CD4-positive, alpha-beta T cell (primary cell): ENCODE measurements at regions of chr1 and their contacts with region 1.

Region 1: DNA sequence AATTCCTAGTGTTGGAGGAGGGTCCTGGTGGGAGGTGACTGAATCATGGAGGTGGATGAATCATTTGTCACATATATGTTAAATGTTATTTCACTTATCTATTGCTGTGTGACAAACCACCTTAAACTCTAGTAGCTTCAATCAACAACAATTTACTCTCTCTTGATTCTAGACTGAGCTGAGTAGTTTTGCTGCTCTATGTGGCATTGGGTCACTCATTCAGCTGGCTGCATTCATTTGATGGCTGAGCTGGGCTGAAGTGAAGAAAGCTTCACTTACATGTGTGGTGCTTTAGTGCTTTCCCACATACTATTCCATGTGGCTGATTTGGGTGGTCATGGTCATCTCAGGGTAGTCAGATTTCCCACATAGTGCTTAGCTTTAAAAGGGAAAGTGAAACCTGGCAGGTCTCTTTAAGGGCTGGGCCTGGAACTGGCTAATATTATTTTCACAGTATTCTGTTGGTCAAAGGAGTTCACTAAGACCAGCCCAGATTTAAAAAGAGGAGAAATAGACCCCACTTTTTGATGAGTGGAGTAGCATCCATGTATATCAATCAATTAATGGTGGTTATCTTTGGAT is 10.5 kb downstream of the DNAH14 start:
- DNase-seq: no peak
- ATAC-seq: no peak
- H3K4me3 ChIP-seq: no peak overlapping the region
- H3K4me3 Mint-ChIP-seq: no peak overlapping the region
- H3K27ac ChIP-seq: no peak overlapping the region
- H3K27ac Mint-ChIP-seq: no peak overlapping the region
- H3K4me1 ChIP-seq: no peaks in the 10 kb centered on the region
- H3K4me1 Mint-ChIP-seq: no peaks in the 10 kb centered on the region
- H3K27me3 ChIP-seq: no peaks in the 10 kb centered on the region
- H3K27me3 Mint-ChIP-seq: no peaks in the 10 kb centered on the region
- CTCF ChIP-seq: no peak

Region 2: DNA sequence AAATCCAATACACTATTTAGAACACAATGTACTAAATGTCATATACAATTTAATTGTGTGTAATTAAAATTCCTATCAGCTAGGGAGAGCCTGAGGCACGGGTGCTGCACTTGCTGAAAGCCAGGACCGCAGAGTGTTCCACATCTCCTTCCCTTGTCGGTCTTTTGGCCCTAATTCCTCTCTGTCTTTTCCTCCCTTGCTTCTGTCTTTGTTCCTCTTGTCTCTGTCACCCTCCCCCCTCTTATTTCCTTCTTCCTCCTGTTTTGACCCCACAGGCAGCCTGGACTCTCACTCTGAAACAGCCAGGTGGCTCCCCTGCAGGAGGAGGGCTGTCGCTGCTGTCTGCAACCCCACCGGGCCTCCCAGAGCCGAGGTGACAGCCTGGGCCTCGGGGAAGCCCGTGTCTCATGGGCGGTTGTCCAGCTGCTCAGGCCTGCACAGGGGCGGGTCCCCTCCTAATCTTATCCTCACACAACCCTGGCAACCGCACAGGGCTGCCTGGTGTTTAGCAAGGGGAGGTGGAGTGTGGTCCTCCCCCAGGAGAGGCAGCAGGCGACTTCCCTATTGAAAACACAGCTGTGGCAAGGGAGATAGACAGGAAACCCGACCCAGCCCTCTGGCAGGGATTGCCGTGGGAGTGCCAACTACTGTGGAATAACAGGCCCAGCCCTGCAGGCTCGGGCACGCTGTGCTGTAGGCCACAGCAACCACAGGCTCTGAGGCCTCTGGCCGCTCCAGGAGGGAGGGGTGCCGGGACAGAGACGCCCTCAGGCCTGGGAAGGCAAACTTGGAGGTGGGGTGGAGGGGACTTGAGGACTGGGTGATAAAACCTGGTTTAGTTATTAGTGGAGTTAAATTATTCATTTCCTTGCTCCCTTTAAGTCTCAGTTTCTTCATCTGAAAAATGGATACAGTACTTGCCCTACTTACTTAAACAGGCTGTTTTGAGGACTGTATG is 436.5 kb before region 1 on chr1:
- CTCF ChIA-PET with region 1: no interaction called
- POLR2A ChIA-PET with region 1: no interaction called
- intact Hi-C with region 1: no loop called
- DNase-seq: peak in 3 of 14 experiments; percentile 4 to 40 (median 32)
- ATAC-seq: peak; percentile 14
- H3K4me3 ChIP-seq: no peak overlapping the region
- H3K4me3 Mint-ChIP-seq: no peak overlapping the region
- H3K27ac ChIP-seq: no peak overlapping the region
- H3K27ac Mint-ChIP-seq: no peak overlapping the region
- H3K4me1 ChIP-seq: peaks cover 12% of the 10 kb centered on the region
- H3K4me1 Mint-ChIP-seq: peaks cover 30% of the 10 kb centered on the region
- H3K27me3 ChIP-seq: no peaks in the 10 kb centered on the region
- H3K27me3 Mint-ChIP-seq: no peaks in the 10 kb centered on the region
- CTCF ChIP-seq: no peak

Region 3: GRCh38 chr1:224769452-224770335 is 170.2 kb before region 1 on chr1:
- CTCF ChIA-PET with region 1: no interaction called
- POLR2A ChIA-PET with region 1: no interaction called
- intact Hi-C with region 1: no loop called
- DNase-seq: no peak
- ATAC-seq: no peak
- H3K4me3 ChIP-seq: no peak overlapping the region
- H3K4me3 Mint-ChIP-seq: no peak overlapping the region
- H3K27ac ChIP-seq: no peak overlapping the region
- H3K27ac Mint-ChIP-seq: no peak overlapping the region
- H3K4me1 ChIP-seq: no peaks in the 10 kb centered on the region
- H3K4me1 Mint-ChIP-seq: no peaks in the 10 kb centered on the region
- H3K27me3 ChIP-seq: peaks cover 4% of the 10 kb centered on the region in 2 experiments
- H3K27me3 Mint-ChIP-seq: peaks cover 20% of the 10 kb centered on the region
- CTCF ChIP-seq: no peak

Region 4: GRCh38 chr1:224879162-224879803 is 60.7 kb before region 1 on chr1:
- CTCF ChIA-PET with region 1: no interaction called
- POLR2A ChIA-PET with region 1: no interaction called
- intact Hi-C with region 1: no loop called
- DNase-seq: no peak
- ATAC-seq: no peak
- H3K4me3 ChIP-seq: no peak overlapping the region
- H3K4me3 Mint-ChIP-seq: no peak overlapping the region
- H3K27ac ChIP-seq: no peak overlapping the region
- H3K27ac Mint-ChIP-seq: no peak overlapping the region
- H3K4me1 ChIP-seq: no peaks in the 10 kb centered on the region
- H3K4me1 Mint-ChIP-seq: no peaks in the 10 kb centered on the region
- H3K27me3 ChIP-seq: peaks cover 0 to 4% of the 10 kb centered on the region in 2 experiments
- H3K27me3 Mint-ChIP-seq: peaks cover 38% of the 10 kb centered on the region
- CTCF ChIP-seq: no peak

Region 5: DNA sequence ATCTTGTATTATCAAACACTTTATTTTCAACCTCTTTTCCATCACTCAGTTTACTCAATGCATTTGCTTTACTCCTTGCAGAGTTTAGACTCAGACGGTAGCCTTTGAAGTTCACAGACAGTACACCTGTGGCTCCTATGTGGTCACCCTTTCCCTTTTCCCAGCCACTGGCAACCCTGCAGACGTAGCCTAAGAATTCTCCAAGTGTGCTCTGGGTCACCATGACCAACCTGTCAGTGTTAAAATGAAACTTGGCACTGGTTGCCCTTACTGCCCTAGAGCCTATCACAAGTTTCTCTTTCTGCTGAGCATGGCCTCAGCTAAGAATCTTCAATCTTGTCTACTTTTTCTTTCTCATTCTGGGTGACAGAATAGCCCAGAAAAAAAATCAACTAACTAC is 36.0 kb before region 1 on chr1:
- CTCF ChIA-PET with region 1: no interaction called
- POLR2A ChIA-PET with region 1: no interaction called
- intact Hi-C with region 1: no loop called
- DNase-seq: no peak
- ATAC-seq: no peak
- H3K4me3 ChIP-seq: no peak overlapping the region
- H3K4me3 Mint-ChIP-seq: no peak overlapping the region
- H3K27ac ChIP-seq: no peak overlapping the region
- H3K27ac Mint-ChIP-seq: no peak overlapping the region
- H3K4me1 ChIP-seq: no peaks in the 10 kb centered on the region
- H3K4me1 Mint-ChIP-seq: no peaks in the 10 kb centered on the region
- H3K27me3 ChIP-seq: peaks cover 0 to 19% of the 10 kb centered on the region in 2 experiments
- H3K27me3 Mint-ChIP-seq: peaks cover 21% of the 10 kb centered on the region
- CTCF ChIP-seq: no peak

Region 6: DNA sequence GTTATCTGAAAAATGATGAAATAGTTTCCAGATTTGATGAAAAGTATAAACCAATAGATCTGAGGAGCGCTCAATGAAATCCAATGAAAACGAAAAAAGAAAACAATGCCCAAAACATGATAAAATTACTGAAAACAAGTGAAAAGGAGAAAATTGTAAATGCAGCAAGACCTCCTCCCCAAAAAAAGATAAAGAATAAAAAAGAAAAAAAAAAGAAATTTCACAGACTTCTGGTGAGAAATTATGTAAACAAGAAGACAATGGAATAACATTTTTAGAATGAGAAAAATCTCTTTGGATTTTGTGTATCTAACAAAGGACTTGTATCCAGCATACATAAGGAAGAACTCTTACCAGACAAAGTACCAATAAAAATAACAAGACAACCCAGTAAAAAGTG is 123.8 kb after region 1 on chr1:
- CTCF ChIA-PET with region 1: no interaction called
- POLR2A ChIA-PET with region 1: no interaction called
- intact Hi-C with region 1: loop called in 1 of 2 experiments (anchors 2 kb)
- DNase-seq: no peak
- ATAC-seq: no peak
- H3K4me3 ChIP-seq: no peak overlapping the region
- H3K4me3 Mint-ChIP-seq: no peak overlapping the region
- H3K27ac ChIP-seq: no peak overlapping the region
- H3K27ac Mint-ChIP-seq: no peak overlapping the region
- H3K4me1 ChIP-seq: no peaks in the 10 kb centered on the region
- H3K4me1 Mint-ChIP-seq: no peaks in the 10 kb centered on the region
- H3K27me3 ChIP-seq: no peaks in the 10 kb centered on the region
- H3K27me3 Mint-ChIP-seq: peaks cover 10% of the 10 kb centered on the region
- CTCF ChIP-seq: no peak